ENCODE measurements at regions of chr16 and their contacts with region 1.

Region 1: DNA sequence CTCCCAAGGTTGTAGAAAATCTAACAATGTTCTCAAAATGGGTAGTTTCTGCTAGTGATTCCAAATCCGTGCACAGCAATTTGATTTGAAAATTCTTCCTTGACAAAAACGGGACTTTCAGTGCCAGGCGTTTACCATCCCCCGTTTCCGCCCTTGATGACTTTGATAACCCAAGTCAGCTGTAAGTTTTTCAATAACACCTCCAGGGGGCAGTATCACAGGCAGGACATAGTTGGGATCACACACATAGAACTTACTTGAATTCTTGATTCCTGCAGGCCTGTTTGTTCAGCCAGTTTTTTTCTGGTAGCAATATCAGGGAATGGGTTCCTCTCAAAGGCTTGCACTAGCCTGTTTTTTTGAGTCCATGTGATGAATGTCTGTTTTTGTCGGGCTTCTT is 5.6 kb downstream of the DUXB start:
- DNase-seq: no peak
- ATAC-seq: no peak
- H3K4me3 ChIP-seq: no peak overlapping the region
- H3K27ac ChIP-seq: no peak overlapping the region
- H3K4me1 ChIP-seq: no peaks in the 10 kb centered on the region
- H3K27me3 ChIP-seq: no peaks in the 10 kb centered on the region
- CTCF ChIP-seq: peak; percentile 22

Region 2: GRCh38 chr16:77183137-77183536 is 1487.4 kb after region 1 on chr16:
- CTCF ChIA-PET with region 1: interaction called, 3 read pairs
- POLR2A ChIA-PET with region 1: interaction called, 15 read pairs
- in situ Hi-C with region 1: no loop called
- intact Hi-C with region 1: no loop called
- DNase-seq: no peak
- ATAC-seq: no peak
- H3K4me3 ChIP-seq: no peak overlapping the region
- H3K27ac ChIP-seq: no peak overlapping the region
- H3K4me1 ChIP-seq: no peaks in the 10 kb centered on the region; the same call in 1 of the 2 replicates
- H3K27me3 ChIP-seq: peaks cover 2% of the 10 kb centered on the region; the same call in 1 of the 2 replicates
- CTCF ChIP-seq: no peak